Activated CD4-positive, alpha-beta T cell treated with anti-CD3 and anti-CD28 coated beads, Interleukin-2, amount 10 ng/mL, durations not matched to agents 24 days and 14 days (primary cell): ENCODE measurements at regions of chr3 and their contacts with region 1.

Region 1: DNA sequence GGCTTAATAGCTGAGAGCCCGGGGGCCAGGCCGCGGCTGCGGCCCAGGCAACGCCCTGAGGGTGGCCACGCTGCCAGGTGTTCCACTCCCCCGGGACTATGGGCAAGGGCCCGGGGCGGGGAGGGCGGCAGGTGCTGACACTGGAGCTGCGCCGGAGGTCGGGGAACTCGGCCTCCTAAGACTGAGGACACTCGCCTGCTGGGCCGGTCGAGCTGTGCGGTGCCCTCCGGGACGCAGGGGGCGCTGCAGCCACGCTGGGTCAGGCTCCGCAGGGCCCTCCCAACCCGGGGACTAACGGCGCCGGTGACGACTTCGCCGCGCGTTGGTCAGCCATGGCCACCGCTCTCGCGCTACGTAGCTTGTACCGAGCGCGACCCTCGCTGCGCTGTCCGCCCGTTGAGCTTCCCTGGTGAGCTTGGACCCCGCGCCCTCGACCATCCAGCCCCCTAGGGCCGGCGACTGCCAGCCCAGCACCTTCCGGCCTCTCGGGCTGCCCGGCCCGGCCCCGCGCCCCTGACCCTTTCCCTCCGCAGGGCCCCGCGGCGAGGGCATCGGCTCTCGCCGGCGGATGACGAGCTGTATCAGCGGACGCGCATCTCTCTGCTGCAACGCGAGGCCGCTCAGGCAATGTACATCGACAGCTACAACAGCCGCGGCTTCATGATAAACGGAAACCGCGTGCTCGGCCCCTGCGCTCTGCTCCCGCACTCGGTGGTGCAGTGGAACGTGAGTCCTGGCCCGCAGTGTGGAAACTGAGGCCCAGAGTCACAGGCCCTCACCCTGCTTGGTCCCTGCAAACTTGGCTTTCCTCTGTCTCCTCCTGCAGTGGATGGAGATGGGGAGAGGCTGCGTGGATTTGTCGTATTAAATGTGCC is at the start of gene NDUFAF3:
- DNase-seq: peak; percentile 98
- H3K4me3 Mint-ChIP-seq: peak within 1 kb of the TSS; percentile 96
- H3K27ac Mint-ChIP-seq: peak within 1 kb of the TSS; percentile 98
- H3K4me1 Mint-ChIP-seq: peaks cover 35% of the 10 kb centered on the region
- H3K27me3 Mint-ChIP-seq: no peaks in the 10 kb centered on the region
- total RNA-seq, gene NDUFAF3: 123 and 126 TPM in 2 replicates

Region 2: DNA sequence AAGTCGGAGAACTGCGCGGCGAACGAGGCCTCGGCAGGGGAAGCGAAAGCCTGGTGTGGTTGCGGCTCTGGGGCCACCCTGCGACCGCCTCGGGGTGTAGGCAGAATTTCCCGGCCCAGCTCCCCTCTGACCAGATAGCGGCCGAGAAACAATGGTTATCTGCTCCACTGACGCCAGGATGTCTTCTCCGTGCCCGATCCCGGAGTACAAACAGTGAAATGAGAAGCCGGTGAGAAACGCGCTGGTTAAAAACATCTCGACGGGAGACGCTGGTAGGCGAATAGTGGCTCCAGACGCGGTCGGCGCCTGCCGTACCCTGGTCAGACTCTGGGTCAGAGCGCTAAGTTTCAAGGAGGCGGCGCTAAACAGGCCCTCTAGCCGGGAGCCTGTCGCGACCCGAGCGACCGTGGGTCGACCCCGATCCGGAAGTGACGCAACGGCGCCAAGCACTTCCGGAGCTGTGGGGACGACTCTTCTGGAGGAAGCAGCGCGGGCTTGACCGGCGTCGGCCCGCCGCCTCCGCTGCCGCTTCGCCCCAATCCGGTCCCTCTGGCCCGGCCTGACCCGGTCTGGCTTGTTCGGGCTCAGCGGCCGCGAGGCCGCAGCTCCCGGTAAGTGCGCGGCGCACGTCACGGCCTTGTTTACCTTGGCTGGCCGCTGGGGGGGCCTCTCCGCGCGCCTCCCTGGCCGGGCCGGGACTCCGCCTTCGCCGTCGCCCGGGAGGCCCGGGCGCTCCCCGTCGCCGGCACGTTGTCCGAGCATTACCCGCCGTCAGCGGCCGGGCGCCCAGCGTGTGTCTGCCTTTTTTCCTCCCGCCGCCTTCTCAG is 103.4 kb before region 1 on chr3 and contains the start of gene ARIH2:
- intact Hi-C with region 1: loop called (anchors 1 kb)
- DNase-seq: peak; percentile 97
- H3K4me3 Mint-ChIP-seq: peak within 1 kb of the TSS; percentile 91
- H3K27ac Mint-ChIP-seq: peak within 1 kb of the TSS; percentile 97
- H3K4me1 Mint-ChIP-seq: peaks cover 22% of the 10 kb centered on the region
- H3K27me3 Mint-ChIP-seq: no peaks in the 10 kb centered on the region
- total RNA-seq, gene ARIH2: 157 TPM in 2 replicates

Region 3: GRCh38 chr3:49007068-49007770 is 14.8 kb before region 1 on chr3 and contains the start of gene WDR6:
- intact Hi-C with region 1: loop called (anchors 1 kb)
- DNase-seq: peak; percentile 99
- H3K4me3 Mint-ChIP-seq: peak within 1 kb of the TSS; percentile 94
- H3K27ac Mint-ChIP-seq: peak within 1 kb of the TSS; percentile 99
- H3K4me1 Mint-ChIP-seq: peaks cover 27% of the 10 kb centered on the region
- H3K27me3 Mint-ChIP-seq: no peaks in the 10 kb centered on the region
- total RNA-seq, gene WDR6: 141 and 153 TPM in 2 replicates

Region 4: DNA sequence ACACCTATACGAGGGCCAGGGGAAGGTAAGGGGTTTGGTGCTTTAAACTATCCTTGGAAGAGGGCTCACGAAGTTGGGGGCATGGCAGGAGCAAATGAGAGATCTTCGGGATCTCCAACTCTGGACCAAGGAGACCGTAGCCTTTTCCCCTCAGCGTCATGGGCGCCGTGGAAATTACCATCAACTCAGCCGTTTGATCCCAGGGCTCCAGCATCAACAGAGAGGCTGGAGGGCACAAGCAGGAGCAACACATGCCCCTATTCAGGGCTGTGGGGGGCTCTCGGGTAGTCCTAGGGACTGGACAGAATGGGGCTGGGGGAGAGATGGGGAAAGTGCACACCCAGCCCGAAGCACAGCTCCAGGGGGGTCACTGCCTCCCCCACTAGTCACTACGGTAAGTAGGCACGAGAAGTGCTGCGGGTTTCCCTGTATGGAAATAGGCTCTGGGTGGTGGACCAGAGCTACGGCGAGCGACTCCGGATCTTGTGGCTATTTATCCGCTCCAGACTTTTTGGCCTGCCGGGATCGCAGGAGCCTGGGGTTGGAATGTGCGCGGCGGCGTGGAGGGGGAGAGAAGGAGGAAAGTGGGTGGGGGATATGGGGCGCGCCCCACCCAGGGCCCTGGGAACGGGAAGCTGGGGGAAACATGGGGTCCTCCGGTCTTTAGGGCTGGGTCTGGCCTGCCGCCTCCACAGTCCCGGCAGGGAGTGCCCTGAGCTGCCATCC is 111.3 kb after region 1 on chr3:
- intact Hi-C with region 1: no loop called
- DNase-seq: no peak
- H3K4me3 Mint-ChIP-seq: no peak overlapping the region
- H3K27ac Mint-ChIP-seq: no peak overlapping the region
- H3K4me1 Mint-ChIP-seq: peaks cover 3% of the 10 kb centered on the region
- H3K27me3 Mint-ChIP-seq: peaks cover 2% of the 10 kb centered on the region